AG04450 (cell line): ENCODE measurements at regions of chr13 and their contacts with region 1.

Region 1: GRCh38 chr13:97109841-97110492 is 112.2 kb upstream of the MBNL2 start:
- DNase-seq: no peak
- H3K4me3 ChIP-seq: no peak overlapping the region
- H3K27ac ChIP-seq: no peak overlapping the region
- H3K27me3 ChIP-seq: no peaks in the 10 kb centered on the region
- CTCF ChIP-seq: peak; percentile 89

Region 2: GRCh38 chr13:97141564-97142005 is 31.6 kb after region 1 on chr13:
- CTCF ChIA-PET with region 1: interaction called, 28 read pairs
- POLR2A ChIA-PET with region 1: interaction called, 3 read pairs
- DNase-seq: peak; percentile 71
- H3K4me3 ChIP-seq: peak overlapping the region; percentile 18; the same call in 1 of the 2 replicates
- H3K27ac ChIP-seq: no peak overlapping the region
- H3K27me3 ChIP-seq: no peaks in the 10 kb centered on the region
- CTCF ChIP-seq: no peak

Region 3: GRCh38 chr13:97235549-97236231 is 125.7 kb after region 1 on chr13:
- CTCF ChIA-PET with region 1: interaction called, 10 read pairs
- POLR2A ChIA-PET with region 1: no interaction called
- DNase-seq: no peak
- H3K4me3 ChIP-seq: no peak overlapping the region
- H3K27ac ChIP-seq: no peak overlapping the region
- H3K27me3 ChIP-seq: no peaks in the 10 kb centered on the region
- CTCF ChIP-seq: no peak

Region 4: DNA sequence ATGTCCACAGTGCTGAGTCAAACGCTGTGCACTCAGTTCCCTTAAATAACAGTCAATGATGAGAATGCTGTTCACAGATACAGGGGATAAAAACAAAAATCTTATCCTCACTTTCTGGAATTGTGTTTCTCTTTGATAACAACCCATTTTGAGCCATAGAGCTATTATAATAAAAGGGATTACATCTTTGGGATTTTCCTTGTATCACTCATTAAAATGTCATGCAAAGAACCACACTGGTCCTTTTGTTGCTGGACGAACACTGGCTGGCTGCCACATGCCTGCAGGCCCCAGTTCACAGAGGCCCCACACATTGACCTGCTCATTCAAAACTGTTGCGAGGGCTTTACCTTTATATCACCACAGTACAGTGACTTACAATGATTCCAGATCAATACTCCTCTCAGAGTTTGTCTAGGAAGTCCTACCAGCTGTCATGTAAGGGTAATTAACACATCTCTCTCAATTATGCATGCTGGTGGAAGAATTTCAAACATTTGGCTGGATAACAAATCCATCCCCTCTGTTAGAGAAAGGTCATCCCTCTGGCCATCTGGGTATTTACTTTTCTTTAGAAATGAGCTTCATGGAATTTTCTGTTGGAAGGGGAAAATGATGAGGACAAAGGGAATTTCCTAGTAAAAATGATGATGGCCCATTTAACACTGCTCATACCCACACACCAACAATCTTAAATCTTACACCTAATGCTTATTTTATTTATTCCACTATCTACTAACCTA is 198.1 kb after region 1 on chr13:
- CTCF ChIA-PET with region 1: interaction called, 10 read pairs
- POLR2A ChIA-PET with region 1: no interaction called
- DNase-seq: no peak
- H3K4me3 ChIP-seq: no peak overlapping the region
- H3K27ac ChIP-seq: peak overlapping the region; percentile 40
- H3K27me3 ChIP-seq: no peaks in the 10 kb centered on the region
- CTCF ChIP-seq: no peak

Region 5: GRCh38 chr13:97344265-97345175 is 234.6 kb after region 1 on chr13:
- CTCF ChIA-PET with region 1: interaction called, 73 read pairs
- POLR2A ChIA-PET with region 1: no interaction called
- DNase-seq: no peak
- H3K4me3 ChIP-seq: no peak overlapping the region
- H3K27ac ChIP-seq: no peak overlapping the region
- H3K27me3 ChIP-seq: no peaks in the 10 kb centered on the region
- CTCF ChIP-seq: peak; percentile 80

Region 6: GRCh38 chr13:97386801-97387484 is 277.0 kb after region 1 on chr13:
- CTCF ChIA-PET with region 1: interaction called, 11 read pairs
- POLR2A ChIA-PET with region 1: no interaction called
- DNase-seq: no peak
- H3K4me3 ChIP-seq: no peak overlapping the region
- H3K27ac ChIP-seq: no peak overlapping the region
- H3K27me3 ChIP-seq: no peaks in the 10 kb centered on the region
- CTCF ChIP-seq: no peak

Region 7: DNA sequence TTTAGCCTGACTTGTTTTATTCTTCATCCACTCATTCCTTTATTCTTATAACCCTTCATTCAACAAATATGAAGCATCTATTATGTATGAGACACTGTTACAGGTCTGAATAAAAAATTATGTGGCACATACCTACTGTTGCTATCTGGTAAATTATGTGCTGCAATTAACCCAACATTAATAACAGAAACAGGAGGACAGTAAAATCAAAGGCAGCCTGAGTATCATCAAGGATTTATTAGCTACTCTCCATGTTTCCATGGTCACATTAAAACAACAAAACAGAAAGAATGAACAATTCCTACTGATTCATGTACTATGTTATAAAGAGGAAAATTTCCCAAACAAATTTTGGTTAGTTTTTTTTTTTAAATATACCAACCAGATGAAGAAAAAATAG is 367.9 kb after region 1 on chr13:
- CTCF ChIA-PET with region 1: no interaction called
- POLR2A ChIA-PET with region 1: no interaction called
- DNase-seq: no peak
- H3K4me3 ChIP-seq: no peak overlapping the region
- H3K27ac ChIP-seq: no peak overlapping the region
- H3K27me3 ChIP-seq: no peaks in the 10 kb centered on the region
- CTCF ChIP-seq: no peak

Region 8: DNA sequence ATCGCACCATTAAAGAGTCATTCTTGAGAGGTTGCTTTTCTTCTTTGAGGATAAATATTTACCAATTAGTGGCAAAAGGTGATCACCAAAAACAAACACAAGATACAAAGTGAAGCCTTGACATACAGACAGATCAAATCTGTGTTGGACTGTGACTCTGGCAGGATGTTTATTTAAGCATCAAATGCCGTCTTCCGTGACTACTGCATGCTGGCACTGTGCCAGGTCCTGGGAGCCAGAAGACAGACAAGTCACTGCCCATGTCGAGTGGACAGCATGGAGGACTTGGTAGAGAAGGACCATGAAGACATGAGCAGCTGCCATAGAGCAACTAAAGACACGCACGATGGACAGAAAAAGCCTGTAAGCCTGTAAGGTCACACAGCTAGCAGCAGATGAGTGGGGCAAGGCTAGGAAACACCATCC is 940.1 kb after region 1 on chr13:
- CTCF ChIA-PET with region 1: no interaction called
- POLR2A ChIA-PET with region 1: no interaction called
- DNase-seq: no peak
- H3K4me3 ChIP-seq: no peak overlapping the region
- H3K27ac ChIP-seq: no peak overlapping the region
- H3K27me3 ChIP-seq: no peaks in the 10 kb centered on the region
- CTCF ChIP-seq: no peak